ENCODE measurements at regions of chr14 and their contacts with region 1.

Region 1: DNA sequence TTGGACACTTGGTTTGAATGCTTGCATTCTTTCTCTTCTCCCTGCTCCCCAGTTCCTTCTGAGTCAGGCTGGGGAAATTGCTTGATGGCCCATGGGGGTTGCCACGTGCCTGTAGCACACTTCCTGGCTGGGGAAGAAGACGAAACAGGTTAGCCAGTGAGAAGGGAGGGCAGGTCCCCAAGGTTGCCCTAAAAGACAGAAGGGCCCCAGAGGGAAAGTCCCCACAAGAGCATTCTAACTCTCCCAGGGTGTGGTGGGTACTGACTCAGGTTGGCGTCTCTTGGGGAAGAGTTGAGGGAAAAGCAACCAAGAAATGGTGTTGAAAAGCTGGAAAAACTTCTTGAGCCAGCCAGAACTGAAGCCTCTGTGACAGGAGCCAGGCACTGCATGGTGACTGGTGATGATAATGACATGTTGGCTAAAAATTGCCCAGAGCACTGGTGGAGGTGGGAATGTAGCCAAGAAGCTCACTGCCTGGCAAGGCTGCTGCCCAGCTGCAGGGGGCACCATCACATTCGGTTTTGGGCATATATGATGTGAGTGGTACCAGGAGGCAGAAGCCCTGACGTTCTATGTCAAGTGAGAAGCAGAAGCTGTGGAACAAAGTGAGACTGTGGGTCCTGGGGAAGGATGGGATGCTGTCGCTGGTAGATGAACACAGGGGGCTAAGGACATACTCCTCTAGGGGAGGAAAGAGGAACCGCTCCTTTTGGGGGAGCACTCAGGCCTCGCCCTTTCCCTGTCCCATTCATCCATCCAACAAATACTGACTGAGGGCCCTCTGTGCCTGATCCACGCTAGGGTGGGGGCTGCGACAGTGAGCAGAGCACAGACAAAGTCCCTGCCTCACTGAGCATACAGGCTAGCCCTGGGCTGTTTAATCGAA is 8.1 kb upstream of the RABGGTA start:
- DNase-seq: peak; percentile 57
- H3K4me3 Mint-ChIP-seq: no peak overlapping the region
- H3K27ac Mint-ChIP-seq: peak overlapping the region; percentile 47
- H3K4me1 Mint-ChIP-seq: peaks cover 29% of the 10 kb centered on the region
- H3K27me3 Mint-ChIP-seq: no peaks in the 10 kb centered on the region
- CTCF ChIP-seq: no peak

Region 2: GRCh38 chr14:24259252-24259995 is 20.1 kb before region 1 on chr14:
- CTCF ChIA-PET with region 1: interaction called, 7 read pairs
- POLR2A ChIA-PET with region 1: interaction called, 48 read pairs
- intact Hi-C with region 1: no loop called
- DNase-seq: peak; percentile 66
- H3K4me3 Mint-ChIP-seq: peak overlapping the region; percentile 57
- H3K27ac Mint-ChIP-seq: peak overlapping the region; percentile 97
- H3K4me1 Mint-ChIP-seq: peaks cover 47% of the 10 kb centered on the region
- H3K27me3 Mint-ChIP-seq: no peaks in the 10 kb centered on the region
- CTCF ChIP-seq: no peak

Region 3: DNA sequence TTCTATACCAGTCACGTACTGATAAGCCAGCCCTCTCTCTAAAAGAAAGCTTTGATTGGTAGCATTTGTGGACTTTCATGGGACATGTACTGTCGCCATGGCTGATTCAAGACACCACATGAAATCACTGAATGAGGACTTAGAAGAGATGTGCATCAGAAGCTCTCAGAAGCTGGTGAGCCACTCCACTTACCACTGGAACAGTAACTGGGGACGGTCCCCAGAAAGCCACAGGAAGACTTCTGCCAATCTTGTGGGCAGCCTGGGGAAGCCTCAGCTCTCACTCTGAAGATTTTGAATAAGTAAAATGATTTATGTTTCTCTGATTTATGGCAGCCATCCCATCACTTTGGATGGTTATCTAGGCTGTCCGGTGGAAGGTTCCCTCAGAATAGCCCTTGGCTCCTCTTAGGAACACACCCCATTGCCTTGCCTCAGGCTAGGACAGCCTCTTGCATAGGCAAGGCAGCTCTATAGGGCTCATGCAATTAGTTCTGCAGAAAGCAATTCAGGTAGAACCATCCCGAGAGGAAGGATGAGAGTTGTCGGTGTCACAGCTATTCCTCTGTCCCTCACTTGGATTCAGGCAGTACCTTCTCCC is 10.2 kb after region 1 on chr14:
- CTCF ChIA-PET with region 1: interaction called, 392 read pairs
- POLR2A ChIA-PET with region 1: interaction called, 115 read pairs
- intact Hi-C with region 1: no loop called
- DNase-seq: no peak
- H3K4me3 Mint-ChIP-seq: no peak overlapping the region
- H3K27ac Mint-ChIP-seq: peak overlapping the region; percentile 73
- H3K4me1 Mint-ChIP-seq: peaks cover 13% of the 10 kb centered on the region
- H3K27me3 Mint-ChIP-seq: no peaks in the 10 kb centered on the region
- CTCF ChIP-seq: no peak

Region 4: DNA sequence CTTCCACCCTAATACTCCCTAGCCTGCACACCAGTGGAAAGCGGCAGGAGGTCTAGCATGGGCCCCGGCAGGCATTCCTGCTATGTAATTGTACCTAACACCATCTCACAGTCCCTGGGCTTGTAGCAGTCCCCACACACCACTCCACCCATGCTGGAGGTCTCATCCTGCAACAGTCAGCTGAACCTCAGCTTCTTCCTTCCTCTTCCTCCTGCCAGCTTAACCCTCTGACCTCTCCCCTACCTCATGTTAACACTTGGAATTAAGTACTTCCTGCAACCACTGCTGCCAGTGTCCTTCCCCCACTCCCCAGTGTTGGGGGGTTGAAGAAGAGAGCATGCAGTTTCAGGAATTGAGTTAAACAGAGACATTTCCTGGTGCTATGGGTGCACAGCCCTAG is 47.8 kb after region 1 on chr14:
- CTCF ChIA-PET with region 1: no interaction called
- POLR2A ChIA-PET with region 1: no interaction called
- intact Hi-C with region 1: no loop called
- DNase-seq: no peak
- H3K4me3 Mint-ChIP-seq: no peak overlapping the region
- H3K27ac Mint-ChIP-seq: no peak overlapping the region
- H3K4me1 Mint-ChIP-seq: peaks cover 5% of the 10 kb centered on the region
- H3K27me3 Mint-ChIP-seq: no peaks in the 10 kb centered on the region
- CTCF ChIP-seq: no peak

Measured in MCF 10A (cell line).